Left ventricle myocardium superior (tissue), 1 donor: ENCODE measurements at regions of chr2 and their contacts with region 1.

Region 1: DNA sequence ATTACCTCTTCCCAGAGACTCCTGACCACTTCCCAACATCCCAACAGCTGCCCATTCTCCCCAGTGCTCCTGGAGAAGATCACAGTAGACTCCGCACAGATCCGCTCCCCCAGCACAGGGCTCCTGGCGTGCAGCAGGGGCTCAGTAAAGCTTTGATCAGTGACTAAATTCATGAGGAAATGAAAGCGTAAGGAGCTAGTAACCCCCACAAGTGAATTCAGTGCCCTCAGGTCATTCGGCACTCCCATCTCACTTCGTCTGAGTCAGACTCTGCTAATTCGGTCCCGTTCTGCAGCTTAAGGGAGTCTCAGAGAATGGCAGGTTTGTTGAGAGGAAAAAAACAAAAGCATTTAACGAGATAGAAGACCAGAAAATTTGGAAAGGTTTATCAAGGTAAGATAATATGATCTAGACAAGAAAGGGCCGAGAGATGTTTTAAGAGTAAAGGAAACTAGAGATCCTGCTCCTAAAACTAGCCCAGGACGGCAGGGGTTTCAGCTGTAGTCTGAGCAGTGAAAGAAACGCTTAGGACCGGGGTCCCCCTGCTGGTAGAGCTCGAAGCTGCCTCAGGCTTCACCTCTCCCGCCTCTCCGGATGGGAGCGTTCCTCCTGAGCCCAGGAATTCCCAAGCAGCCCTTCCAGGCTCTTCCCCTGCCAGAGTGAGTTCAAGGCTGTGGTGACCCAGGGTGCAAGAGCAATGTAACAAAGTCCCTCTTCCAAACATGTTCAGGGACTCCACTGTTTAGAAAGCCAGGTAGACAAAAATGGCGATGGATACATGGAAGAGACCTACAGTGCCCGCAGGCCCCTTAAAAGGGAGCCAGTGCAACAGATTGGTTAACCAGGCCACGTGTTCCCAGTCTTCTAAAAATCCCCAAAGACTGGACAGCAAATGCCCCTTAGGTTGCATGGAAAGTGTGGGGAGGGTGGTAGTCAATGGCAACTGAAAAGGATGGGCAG is 127.3 kb downstream of the DNER start:
- DNase-seq: peak; percentile 89
- ATAC-seq: peak; percentile 99

Region 2: DNA sequence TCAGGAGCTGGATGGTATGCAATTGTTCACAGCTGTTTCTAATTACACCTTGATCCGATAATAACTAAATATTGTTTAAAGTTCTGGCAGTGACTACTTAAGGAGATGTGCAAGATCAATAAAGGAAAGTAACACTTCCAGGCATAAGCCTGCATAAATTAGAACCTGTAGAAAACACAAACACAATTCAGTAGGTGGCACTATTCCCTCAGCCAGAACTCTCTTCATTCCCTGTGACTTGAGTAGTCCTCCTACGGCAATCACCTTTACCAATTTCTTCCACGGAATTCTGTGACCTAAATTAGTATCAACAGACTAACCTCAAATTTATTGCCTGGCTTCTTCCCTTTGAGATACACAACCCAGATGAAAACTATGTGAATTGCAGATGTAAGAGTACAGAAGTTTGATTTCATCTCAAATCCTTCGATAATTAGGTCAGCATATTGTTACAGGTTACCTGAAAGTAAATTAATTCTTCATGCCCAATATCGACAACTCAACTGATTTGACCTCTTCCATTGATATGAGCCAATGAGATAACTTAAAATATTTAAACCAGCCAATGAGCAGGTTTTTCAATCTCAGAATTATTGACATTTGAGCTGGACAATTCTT is 453.8 kb before region 1 on chr2:
- intact Hi-C with region 1: loop called (anchors 10 kb)
- DNase-seq: no peak
- ATAC-seq: peak; percentile 59

Region 3: GRCh38 chr2:229431327-229431954 is 155.6 kb before region 1 on chr2:
- intact Hi-C with region 1: loop called (anchors 5 kb)
- DNase-seq: no peak
- ATAC-seq: peak; percentile 28

Region 4: GRCh38 chr2:229489016-229489415 is 98.0 kb before region 1 on chr2:
- intact Hi-C with region 1: no loop called
- DNase-seq: no peak
- ATAC-seq: no peak

Region 5: DNA sequence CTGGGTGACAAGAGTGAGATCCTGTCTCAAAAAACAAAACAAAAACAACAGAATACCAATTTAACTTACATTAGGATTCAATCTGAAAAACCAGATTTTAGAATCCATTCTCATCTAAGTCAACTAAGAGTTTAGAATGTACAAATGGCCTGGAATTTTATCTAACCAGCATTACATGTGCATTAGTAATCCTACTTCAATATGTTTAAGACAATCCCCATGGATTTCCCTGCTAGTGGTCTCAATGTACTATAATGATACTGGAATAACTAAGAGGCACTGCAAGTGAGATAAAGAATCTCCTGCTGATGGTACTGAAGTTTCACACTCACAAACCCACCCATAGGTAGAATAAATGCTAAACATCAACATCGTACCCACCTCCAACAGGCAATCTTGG is 181.2 kb after region 1 on chr2:
- intact Hi-C with region 1: no loop called
- DNase-seq: no peak
- ATAC-seq: no peak

Region 6: GRCh38 chr2:229780856-229781773 is 194.1 kb after region 1 on chr2:
- intact Hi-C with region 1: no loop called
- DNase-seq: no peak
- ATAC-seq: peak; percentile 75